ENCODE measurements at regions of chr13 and their contacts with region 1.

Region 1: GRCh38 chr13:45623515-45624090 is 8.1 kb upstream of the ERICH6B start:
- DNase-seq: no peak
- H3K4me3 Mint-ChIP-seq: no peak overlapping the region
- H3K27ac Mint-ChIP-seq: no peak overlapping the region
- H3K4me1 Mint-ChIP-seq: peaks cover 7% of the 10 kb centered on the region
- H3K27me3 Mint-ChIP-seq: peaks cover 33% of the 10 kb centered on the region

Region 2: DNA sequence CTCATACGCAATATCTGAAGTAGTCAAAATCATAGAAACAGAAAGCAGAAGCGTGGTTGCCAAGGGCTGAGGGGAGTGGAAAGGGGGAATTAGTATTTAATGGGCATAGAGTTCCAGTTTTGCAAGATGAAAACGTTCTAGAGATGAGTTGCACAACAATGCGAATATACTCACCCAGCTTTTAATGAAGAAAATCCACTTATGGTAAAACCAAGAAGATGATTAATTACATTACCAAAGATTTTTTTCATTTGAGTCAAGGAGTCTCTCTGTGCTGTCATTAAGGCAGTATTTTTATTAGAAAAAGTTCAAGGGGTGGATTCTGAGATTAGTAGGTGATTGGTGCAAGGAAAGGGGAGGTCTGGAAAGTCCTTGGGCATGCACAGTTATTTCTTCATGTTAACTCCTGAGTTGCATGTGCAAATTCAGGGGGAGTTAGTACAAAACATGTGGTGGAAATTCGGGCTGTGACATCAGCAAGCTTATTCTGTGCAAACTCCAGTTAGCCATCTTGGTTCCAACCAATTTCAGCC is 71.7 kb after region 1 on chr13:
- intact Hi-C with region 1: loop called (anchors 2 kb)
- DNase-seq: no peak
- H3K4me3 Mint-ChIP-seq: no peak overlapping the region
- H3K27ac Mint-ChIP-seq: peak overlapping the region; percentile 31
- H3K4me1 Mint-ChIP-seq: peaks cover 15% of the 10 kb centered on the region
- H3K27me3 Mint-ChIP-seq: peaks cover 2% of the 10 kb centered on the region

Region 3: GRCh38 chr13:45718063-45718462 is 94.5 kb after region 1 on chr13:
- intact Hi-C with region 1: loop called (anchors 1 kb)
- DNase-seq: no peak
- H3K4me3 Mint-ChIP-seq: no peak overlapping the region
- H3K27ac Mint-ChIP-seq: no peak overlapping the region
- H3K4me1 Mint-ChIP-seq: no peaks in the 10 kb centered on the region
- H3K27me3 Mint-ChIP-seq: peaks cover 9% of the 10 kb centered on the region

Region 4: DNA sequence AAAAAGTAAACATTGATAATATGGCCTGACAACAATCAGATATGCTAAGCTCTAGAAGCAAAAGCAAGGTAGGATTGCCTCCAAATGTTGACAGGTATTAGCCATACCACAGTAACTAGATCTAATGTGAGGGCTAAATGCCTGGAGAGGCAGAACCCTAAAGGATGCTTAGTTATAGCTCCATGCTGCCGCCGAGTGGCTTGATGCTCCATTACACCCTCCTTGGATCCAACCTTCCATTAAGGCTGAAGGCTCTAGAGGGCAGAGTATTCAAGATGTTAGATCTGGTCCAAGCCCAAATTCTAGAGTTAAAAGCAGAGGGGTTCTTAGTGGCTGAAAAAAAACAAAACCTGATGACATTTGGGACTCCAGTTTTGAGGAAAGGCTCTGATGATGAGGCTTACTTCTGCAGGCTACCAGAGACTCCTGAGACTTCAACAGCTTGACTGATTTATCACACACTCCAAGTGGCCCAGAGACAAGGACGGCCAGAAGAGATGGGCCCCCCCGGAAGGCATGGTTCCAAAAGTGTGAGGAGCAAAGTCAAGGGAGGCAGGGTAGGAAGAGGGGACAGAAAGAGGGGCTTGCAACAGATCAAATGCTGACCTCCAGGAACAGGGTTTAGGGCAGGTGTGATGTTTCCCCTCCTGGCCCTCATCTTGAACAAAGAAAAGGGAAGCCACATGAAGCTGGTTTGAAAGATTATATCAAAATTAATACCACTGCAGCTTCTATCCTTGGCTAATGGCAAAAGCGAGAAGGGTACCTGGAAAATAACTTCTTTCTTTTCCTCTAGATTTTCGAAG is 503.2 kb after region 1 on chr13:
- intact Hi-C with region 1: loop called (anchors 5 kb)
- DNase-seq: peak; percentile 54
- H3K4me3 Mint-ChIP-seq: no peak overlapping the region
- H3K27ac Mint-ChIP-seq: peak overlapping the region; percentile 34
- H3K4me1 Mint-ChIP-seq: peaks cover 28% of the 10 kb centered on the region
- H3K27me3 Mint-ChIP-seq: no peaks in the 10 kb centered on the region

Region 5: GRCh38 chr13:46382224-46382623 is 758.6 kb after region 1 on chr13:
- intact Hi-C with region 1: no loop called
- DNase-seq: no peak
- H3K4me3 Mint-ChIP-seq: no peak overlapping the region
- H3K27ac Mint-ChIP-seq: no peak overlapping the region
- H3K4me1 Mint-ChIP-seq: peaks cover 4% of the 10 kb centered on the region
- H3K27me3 Mint-ChIP-seq: peaks cover 40% of the 10 kb centered on the region

Measured in activated T-helper 2 cell treated with anti-CD3 and anti-CD28 coated beads, Interferon-gamma antibody, Interleukin-2, Interleukin-4, amounts not matched to agents 10 μg/mL and 5 μg/mL and 100 μg/mL, durations not matched to agents 14 hours and 24 hours and 36 hours (primary cell).